HEK293 (cell line): ENCODE measurements at regions of chr6 and their contacts with region 1.

Region 1: GRCh38 chr6:154156135-154156896 is 117.3 kb downstream of the OPRM1 start:
- H3K4me3 ChIP-seq: no peak overlapping the region
- H3K27ac ChIP-seq: no peak overlapping the region
- H3K4me1 ChIP-seq: no peaks in the 10 kb centered on the region
- CTCF ChIP-seq: peak; percentile 67

Region 2: GRCh38 chr6:154213782-154214181 is 57.5 kb after region 1 on chr6:
- CTCF ChIA-PET with region 1: no interaction called
- POLR2A ChIA-PET with region 1: no interaction called
- H3K4me3 ChIP-seq: no peak overlapping the region
- H3K27ac ChIP-seq: no peak overlapping the region
- H3K4me1 ChIP-seq: no peaks in the 10 kb centered on the region
- CTCF ChIP-seq: no peak

Region 3: GRCh38 chr6:154370545-154370944 is 214.2 kb after region 1 on chr6:
- CTCF ChIA-PET with region 1: interaction called, 18 read pairs
- POLR2A ChIA-PET with region 1: no interaction called
- H3K4me3 ChIP-seq: no peak overlapping the region
- H3K27ac ChIP-seq: no peak overlapping the region
- H3K4me1 ChIP-seq: no peaks in the 10 kb centered on the region
- CTCF ChIP-seq: peak; percentile 42; the same call in 1 of the 2 replicates